SK-N-SH (cell line): ENCODE measurements at regions of chr10 and their contacts with region 1.

Region 1: GRCh38 chr10:48656241-48656913 is 28.3 kb upstream of the WDFY4 start:
- DNase-seq: peak; percentile 97
- H3K4me3 ChIP-seq: peak overlapping the region; percentile 69 to 71
- H3K27ac ChIP-seq: peak overlapping the region; percentile 69 to 74; a peak in 2 of 4 replicates
- H3K4me1 ChIP-seq: peaks cover 5 to 20% of the 10 kb centered on the region in 2 experiments; a peak in 2 of 4 replicates
- H3K27me3 ChIP-seq: no peaks in the 10 kb centered on the region
- CTCF ChIP-seq: peak; percentile 85
- EP300 ChIP-seq: peak in 1 of 2 experiments; percentile 26; a peak in 1 of 4 replicates
- RAD21 ChIP-seq: peak; percentile 93

Region 2: DNA sequence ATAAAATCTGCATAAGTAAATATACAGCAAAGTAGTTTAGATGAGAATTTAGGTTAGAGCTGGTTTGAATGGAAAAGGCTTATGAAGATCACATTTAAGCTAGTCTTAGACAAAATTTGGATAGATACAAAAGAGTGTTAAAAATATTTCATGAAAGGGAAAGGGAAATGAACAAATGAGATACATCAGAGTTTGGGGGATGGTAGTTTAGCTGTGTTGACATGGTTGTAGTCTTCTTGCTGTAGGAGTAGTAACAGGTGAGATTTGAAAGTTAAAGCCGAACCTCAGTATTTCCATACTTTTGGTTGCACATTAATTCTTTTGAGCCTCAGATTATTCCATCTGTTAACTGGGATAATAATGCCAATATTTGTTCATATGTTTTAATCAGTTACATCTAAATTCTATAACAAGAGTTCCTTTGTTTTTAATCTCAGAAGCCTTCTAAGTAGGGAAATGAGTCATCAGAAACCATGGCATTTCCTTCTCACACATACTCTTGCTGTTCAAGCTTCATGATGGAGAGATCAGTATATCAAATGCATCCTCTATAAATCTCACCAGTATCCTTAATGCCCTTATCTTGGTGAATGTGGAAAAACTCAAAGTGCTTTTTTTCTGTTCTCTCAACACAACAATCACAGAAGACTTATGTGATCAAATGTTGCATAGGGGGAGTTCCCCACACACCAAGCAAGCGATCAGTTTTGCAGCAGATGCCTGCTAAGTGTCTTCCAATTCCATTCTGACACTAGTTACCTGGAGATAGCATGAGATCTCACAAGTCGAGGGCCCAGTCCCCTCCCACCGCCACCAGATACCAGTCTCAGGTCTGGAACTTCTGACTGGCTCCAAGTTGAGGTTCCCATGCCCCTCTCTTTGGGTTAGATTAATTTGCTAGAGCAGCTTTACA is 265.2 kb before region 1 on chr10:
- CTCF ChIA-PET with region 1: interaction called, 14 read pairs
- POLR2A ChIA-PET with region 1: no interaction called
- DNase-seq: no peak
- H3K4me3 ChIP-seq: no peak overlapping the region
- H3K27ac ChIP-seq: peak overlapping the region in 1 of 2 experiments; percentile 76; a peak in 3 of 4 replicates
- H3K4me1 ChIP-seq: peaks cover 4 to 30% of the 10 kb centered on the region in 2 experiments; a peak in 3 of 4 replicates
- H3K27me3 ChIP-seq: no peaks in the 10 kb centered on the region
- CTCF ChIP-seq: no peak
- EP300 ChIP-seq: peak in 1 of 2 experiments; percentile 55; a peak in 1 of 4 replicates
- RAD21 ChIP-seq: no peak

Region 3: DNA sequence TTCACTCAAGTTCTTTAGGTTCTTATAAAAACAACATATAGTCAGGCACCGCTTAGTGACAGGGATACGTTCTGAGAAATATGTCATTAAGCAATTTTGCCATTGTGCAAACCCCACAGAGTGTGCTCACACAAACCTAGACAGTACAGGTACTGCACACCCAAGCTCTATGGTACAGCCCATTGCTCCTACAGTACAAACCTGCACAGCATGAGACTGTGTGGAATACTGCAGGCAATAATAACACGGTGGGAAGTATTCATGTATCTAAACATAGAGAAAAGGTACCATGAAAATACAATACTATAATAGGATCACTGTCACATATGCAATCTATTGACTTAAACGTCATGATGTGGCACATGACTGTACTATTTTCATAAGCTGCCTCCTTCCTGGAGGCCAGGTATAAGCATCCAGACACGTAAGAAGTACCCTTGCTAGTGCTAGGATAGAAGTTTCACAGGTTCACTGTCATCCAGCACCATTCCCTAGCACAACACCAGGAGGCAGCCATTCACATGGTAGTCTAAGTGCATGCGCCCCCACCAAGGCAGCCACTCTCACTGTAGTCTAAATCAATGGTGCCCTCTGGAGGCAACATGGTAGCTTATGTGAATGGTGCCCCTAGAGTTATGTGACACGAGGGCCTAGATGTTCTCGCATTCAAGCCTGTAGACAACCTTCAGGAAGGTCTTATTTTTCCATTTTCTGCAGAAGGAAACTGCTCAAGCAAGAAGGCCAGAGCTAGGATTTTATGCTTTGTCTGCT is 150.0 kb before region 1 on chr10:
- CTCF ChIA-PET with region 1: interaction called, 10 read pairs
- POLR2A ChIA-PET with region 1: no interaction called
- DNase-seq: peak; percentile 60
- H3K4me3 ChIP-seq: no peak overlapping the region
- H3K27ac ChIP-seq: no peak overlapping the region
- H3K4me1 ChIP-seq: peaks cover 0 to 16% of the 10 kb centered on the region in 2 experiments; a peak in 1 of 4 replicates
- H3K27me3 ChIP-seq: no peaks in the 10 kb centered on the region
- CTCF ChIP-seq: peak; percentile 52
- EP300 ChIP-seq: no peak
- RAD21 ChIP-seq: peak; percentile 74

Region 4: GRCh38 chr10:48579251-48579960 is 77.0 kb before region 1 on chr10:
- CTCF ChIA-PET with region 1: interaction called, 31 read pairs
- POLR2A ChIA-PET with region 1: no interaction called
- DNase-seq: peak; percentile 68
- H3K4me3 ChIP-seq: no peak overlapping the region
- H3K27ac ChIP-seq: peak overlapping the region; percentile 38 to 93; a peak in 3 of 4 replicates
- H3K4me1 ChIP-seq: peaks cover 16 to 20% of the 10 kb centered on the region in 2 experiments; a peak in 3 of 4 replicates
- H3K27me3 ChIP-seq: no peaks in the 10 kb centered on the region
- CTCF ChIP-seq: no peak
- EP300 ChIP-seq: peak in 1 of 2 experiments; percentile 85; a peak in 2 of 4 replicates
- RAD21 ChIP-seq: no peak

Region 5: DNA sequence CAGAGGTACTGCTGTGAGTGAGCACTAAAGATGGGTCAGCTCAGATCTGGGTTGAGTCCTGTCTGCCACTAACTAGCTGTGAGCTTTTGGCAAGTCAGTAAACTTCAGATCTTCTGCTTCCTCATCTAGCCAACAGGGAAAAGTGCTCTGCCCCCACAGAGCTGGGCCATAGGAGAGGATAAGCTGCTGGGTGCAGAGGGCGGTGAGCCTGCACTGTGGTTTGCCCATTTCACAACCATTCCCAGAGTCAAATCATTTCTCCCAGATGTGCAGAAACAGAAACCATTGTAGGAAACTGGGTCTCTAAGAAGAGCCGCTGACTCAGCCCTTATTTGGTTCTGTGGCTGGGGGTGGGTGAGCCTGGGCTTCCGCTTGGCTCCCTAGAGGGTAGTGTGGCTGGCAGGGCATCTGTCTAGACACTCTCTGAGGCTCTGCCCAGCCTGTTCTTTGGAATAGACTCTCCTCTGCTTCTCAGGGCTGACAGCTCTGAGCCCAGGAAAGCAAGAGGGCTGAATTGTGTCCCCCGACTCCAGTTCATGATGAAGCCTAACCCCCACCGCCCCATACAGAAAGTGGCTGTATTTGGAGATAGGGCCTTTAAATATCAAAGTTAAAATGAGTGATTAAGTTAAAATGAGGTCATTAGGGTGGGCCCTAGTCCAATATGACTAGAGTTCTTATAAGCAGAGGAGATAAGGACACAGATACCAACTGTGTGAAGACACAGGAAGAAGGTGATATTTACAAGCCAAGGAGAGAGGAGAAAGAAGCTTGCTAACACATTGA is 22.0 kb before region 1 on chr10:
- CTCF ChIA-PET with region 1: interaction called, 35 read pairs
- POLR2A ChIA-PET with region 1: no interaction called
- DNase-seq: no peak
- H3K4me3 ChIP-seq: no peak overlapping the region
- H3K27ac ChIP-seq: no peak overlapping the region
- H3K4me1 ChIP-seq: peaks cover 0 to 7% of the 10 kb centered on the region in 2 experiments; a peak in 1 of 4 replicates
- H3K27me3 ChIP-seq: no peaks in the 10 kb centered on the region
- CTCF ChIP-seq: no peak
- EP300 ChIP-seq: no peak
- RAD21 ChIP-seq: no peak

Region 6: GRCh38 chr10:49398000-49398861 is 741.9 kb after region 1 on chr10:
- CTCF ChIA-PET with region 1: interaction called, 10 read pairs
- POLR2A ChIA-PET with region 1: no interaction called
- DNase-seq: peak; percentile 76
- H3K4me3 ChIP-seq: peak overlapping the region; percentile 37 to 41
- H3K27ac ChIP-seq: no peak overlapping the region
- H3K4me1 ChIP-seq: peaks cover 0 to 28% of the 10 kb centered on the region in 2 experiments; a peak in 1 of 4 replicates
- H3K27me3 ChIP-seq: peaks cover 78% of the 10 kb centered on the region
- CTCF ChIP-seq: no peak
- EP300 ChIP-seq: no peak
- RAD21 ChIP-seq: no peak